ENCODE measurements at regions of chr6 and their contacts with region 1.

Region 1: DNA sequence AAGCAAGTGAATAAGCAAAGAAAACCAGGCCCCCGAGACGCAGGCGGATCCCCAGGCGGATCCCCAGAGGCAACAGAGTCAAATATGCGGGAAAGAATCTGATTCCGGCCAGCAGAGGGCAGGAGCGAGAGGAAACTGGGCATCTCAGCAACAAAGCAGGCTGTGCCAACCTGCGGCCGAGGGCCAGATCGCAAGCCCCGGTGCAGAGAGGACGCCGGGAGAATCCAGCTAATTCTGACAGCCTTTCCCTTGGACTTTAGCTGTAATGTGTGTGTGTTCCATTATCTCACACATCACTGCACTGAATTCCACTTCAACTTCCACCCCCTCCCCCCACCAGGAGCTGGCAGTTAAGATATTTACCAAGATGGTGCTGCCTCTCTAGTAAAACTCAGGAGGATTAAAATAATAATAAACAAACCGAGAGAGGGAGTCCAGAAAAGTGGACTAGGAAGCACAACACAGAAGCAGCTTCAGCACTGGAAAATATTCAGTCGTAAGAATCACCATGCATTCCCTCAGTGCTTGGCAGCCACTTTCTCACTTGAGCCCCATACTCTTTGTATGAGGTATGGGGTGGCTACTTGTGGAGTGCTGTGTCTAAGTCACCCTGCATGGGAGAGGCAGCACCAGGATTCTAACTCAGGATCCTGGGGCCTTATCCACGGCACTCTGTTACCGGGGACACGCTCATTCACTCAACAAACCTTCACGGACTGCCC is 66.2 kb upstream of the SNX9 start:
- DNase-seq: peak; percentile 90
- H3K4me3 ChIP-seq: peak overlapping the region in 1 of 8 donors; percentile 22
- H3K27ac ChIP-seq: no peak overlapping the region
- H3K4me1 ChIP-seq: peaks cover 14 to 55% (median 33%) of the 10 kb centered on the region in 6 donors
- H3K27me3 ChIP-seq: peaks cover 0 to 30% (median 0%) of the 10 kb centered on the region in 7 donors
- CTCF ChIP-seq: peak; percentile 60 to 87 (median 80)
- POLR2A ChIP-seq: no peak

Region 2: DNA sequence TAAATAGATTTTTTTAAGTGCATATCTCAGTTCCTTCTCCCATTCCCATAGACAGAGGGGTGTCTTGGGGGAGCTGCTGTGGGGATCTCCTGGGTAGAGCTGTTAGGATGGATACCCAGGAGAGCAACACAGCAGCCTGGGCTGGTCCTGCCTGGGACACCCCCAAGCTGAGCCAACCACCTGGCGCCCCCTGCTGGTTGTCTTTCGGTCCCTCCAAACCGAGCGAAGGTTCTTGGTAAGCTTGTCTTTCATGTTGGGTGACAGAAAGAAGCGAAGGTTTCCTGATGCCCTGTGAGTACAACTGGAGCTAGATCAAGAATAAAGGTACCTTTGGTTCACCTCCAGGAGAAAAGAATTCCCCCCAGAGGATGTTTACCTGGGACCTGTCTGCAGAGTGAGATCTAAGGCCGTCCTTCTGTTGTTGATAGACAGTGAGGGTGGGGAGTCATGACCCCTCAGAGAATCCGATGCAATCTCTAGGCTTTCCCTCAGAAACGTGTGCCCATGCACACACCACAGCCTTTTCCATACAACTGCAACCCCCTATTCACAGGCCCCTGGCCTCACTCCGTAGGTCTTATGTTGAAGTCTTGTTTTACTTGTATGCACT is 117.0 kb after region 1 on chr6:
- intact Hi-C with region 1: loop called (anchors 10 kb)
- DNase-seq: peak; percentile 92
- H3K4me3 ChIP-seq: no peak overlapping the region
- H3K27ac ChIP-seq: no peak overlapping the region
- H3K4me1 ChIP-seq: peaks cover 0 to 26% (median 13%) of the 10 kb centered on the region in 6 donors
- H3K27me3 ChIP-seq: no peaks in the 10 kb centered on the region
- CTCF ChIP-seq: peak in 10 of 11 experiments; percentile 47 to 82 (median 71)
- POLR2A ChIP-seq: no peak

Region 3: DNA sequence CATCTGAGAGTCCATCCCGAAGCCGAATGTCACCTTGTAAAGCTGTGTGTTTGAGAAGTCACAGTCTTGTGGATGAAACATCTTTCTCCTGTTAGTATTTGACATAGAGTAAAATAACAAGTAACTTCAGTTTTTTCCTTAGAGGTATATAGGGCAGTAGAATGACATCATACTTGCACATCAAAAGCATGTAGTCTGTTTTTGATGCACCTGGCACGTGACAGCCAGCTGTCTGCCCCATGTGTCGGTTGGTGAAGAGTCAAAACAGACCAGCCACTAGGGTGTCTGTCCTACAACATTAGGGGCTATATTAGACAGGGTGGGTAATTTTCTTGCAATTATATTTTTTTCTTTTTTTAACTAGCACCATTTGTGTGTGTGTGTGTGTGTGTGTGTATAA is 136.4 kb after region 1 on chr6:
- intact Hi-C with region 1: no loop called
- DNase-seq: no peak
- H3K4me3 ChIP-seq: no peak overlapping the region
- H3K27ac ChIP-seq: no peak overlapping the region
- H3K4me1 ChIP-seq: peaks cover 0 to 18% (median 10%) of the 10 kb centered on the region in 6 donors
- H3K27me3 ChIP-seq: no peaks in the 10 kb centered on the region
- CTCF ChIP-seq: no peak
- POLR2A ChIP-seq: no peak

Region 4: GRCh38 chr6:158072083-158072721 is 315.3 kb after region 1 on chr6:
- intact Hi-C with region 1: loop called (anchors 5 kb)
- DNase-seq: peak; percentile 90
- H3K4me3 ChIP-seq: no peak overlapping the region
- H3K27ac ChIP-seq: no peak overlapping the region
- H3K4me1 ChIP-seq: peaks cover 2 to 29% (median 11%) of the 10 kb centered on the region in 6 donors
- H3K27me3 ChIP-seq: no peaks in the 10 kb centered on the region
- CTCF ChIP-seq: peak; percentile 61 to 85 (median 77)
- POLR2A ChIP-seq: no peak